ENCODE measurements at regions of chr22 and their contacts with region 1.

Region 1: DNA sequence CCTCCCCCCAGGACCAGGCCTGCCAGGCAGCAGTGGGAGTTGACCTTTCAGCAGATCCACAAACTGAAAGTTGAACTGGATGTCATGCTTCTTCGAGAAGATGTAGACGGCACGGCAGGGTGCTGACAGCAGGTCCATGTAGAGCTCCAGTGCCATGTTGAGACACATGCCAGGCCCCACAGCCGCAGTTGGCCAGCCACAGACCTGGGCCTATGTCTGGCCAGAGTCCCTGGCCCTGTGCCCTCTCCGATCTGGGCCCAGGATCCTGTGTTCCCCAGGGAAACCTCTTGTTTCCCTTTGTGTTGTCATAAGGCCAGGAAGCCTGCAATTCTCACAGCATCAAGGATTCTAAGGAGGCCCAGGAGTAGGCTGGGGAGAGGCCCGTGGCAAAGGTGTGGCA is at the start of gene GSTT4:
- DNase-seq: peak; percentile 68 to 87 (median 86)
- ATAC-seq: peak; percentile 67 to 85
- H3K4me3 ChIP-seq: no peak within 1 kb of the TSS
- H3K27ac ChIP-seq: no peak within 1 kb of the TSS
- H3K4me1 ChIP-seq: no peaks in the 10 kb centered on the region
- H3K27me3 ChIP-seq: no peaks in the 10 kb centered on the region
- total RNA-seq, gene GSTT4: not detected

Region 2: GRCh38 chr22:23718371-23719159 is 286.6 kb before region 1 on chr22:
- intact Hi-C with region 1: no loop called
- DNase-seq: peak in 1 of 3 donors; percentile 2
- ATAC-seq: no peak
- H3K4me3 ChIP-seq: no peak overlapping the region
- H3K27ac ChIP-seq: no peak overlapping the region
- H3K4me1 ChIP-seq: peaks cover 7% of the 10 kb centered on the region
- H3K27me3 ChIP-seq: no peaks in the 10 kb centered on the region

Region 3: DNA sequence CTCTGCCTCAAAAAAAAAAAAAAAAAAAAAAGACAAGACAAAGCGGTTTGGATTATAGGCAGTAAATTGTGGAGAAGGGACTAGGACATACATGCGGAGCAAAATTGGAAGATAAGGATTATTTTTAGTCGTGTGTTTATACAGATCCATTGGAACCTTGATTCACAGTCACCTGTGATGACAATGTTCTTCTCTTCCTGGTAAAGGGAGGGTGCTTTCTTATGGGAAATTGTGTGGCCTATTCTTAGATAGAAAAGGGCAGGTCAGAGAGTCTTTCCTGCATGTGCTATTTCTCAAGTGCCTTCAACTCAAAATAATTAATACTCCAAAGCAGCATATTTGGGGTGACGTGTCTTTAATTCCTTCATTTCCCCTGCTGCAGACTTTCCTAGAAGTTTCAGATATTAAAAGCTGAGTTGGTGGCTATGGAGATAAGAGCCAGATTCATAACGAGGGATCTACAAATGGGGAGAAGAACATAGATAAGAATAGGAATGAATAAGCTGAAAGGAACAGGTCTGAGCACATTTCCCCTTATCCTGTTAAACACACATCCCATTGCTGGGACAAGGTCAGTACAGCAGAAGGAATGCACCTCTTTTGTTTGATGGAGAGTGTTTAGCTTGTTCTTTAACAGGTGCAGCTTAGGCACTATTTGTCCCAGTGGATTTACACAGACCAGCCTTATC is 66.7 kb before region 1 on chr22:
- intact Hi-C with region 1: loop called in 1 of 4 experiments (anchors 5 kb)
- DNase-seq: no peak
- ATAC-seq: peak; percentile 24 to 63
- H3K4me3 ChIP-seq: no peak overlapping the region
- H3K27ac ChIP-seq: no peak overlapping the region
- H3K4me1 ChIP-seq: no peaks in the 10 kb centered on the region
- H3K27me3 ChIP-seq: no peaks in the 10 kb centered on the region

Region 4: GRCh38 chr22:24117942-24118341 is 112.7 kb after region 1 on chr22:
- intact Hi-C with region 1: loop called in 1 of 4 experiments (anchors 10 kb)
- DNase-seq: no peak
- ATAC-seq: no peak
- H3K4me3 ChIP-seq: no peak overlapping the region
- H3K27ac ChIP-seq: no peak overlapping the region
- H3K4me1 ChIP-seq: peaks cover 14% of the 10 kb centered on the region
- H3K27me3 ChIP-seq: no peaks in the 10 kb centered on the region

Measured in right cardiac atrium (tissue), 5 donors.